WTC11 (cell line): ENCODE measurements at regions of chr12 and their contacts with region 1.

Region 1: DNA sequence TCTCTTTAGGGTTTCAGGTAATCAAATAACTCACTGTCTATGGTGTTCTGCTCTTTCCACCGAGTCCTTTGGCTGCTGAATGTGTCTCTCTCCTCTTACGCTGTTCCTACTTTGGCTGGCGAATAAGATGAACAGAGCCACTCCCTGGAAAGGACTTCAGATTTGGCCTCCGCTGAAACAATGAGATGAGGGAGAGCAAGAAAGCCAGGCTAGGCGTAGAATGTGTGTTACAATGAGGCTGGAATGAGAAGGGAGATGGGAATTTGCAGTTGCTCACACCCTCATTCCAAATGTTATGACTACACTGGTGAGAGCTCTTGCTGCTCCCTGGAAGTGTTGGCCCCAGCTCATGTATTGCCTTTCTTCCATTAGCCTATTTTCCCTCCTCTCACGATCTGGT is at the start of gene MFAP5:
- DNase-seq: no peak
- ATAC-seq: peak; percentile 29; the same call in 1 of the 2 replicates
- H3K4me3 Mint-ChIP-seq: no peak within 1 kb of the TSS
- H3K27ac Mint-ChIP-seq: no peak within 1 kb of the TSS
- H3K4me1 Mint-ChIP-seq: peaks cover 5% of the 10 kb centered on the region
- H3K27me3 Mint-ChIP-seq: no peaks in the 10 kb centered on the region
- CTCF ChIP-seq: no peak
- total RNA-seq, gene MFAP5: 0.69 to 0.96 TPM in 2 of 3 replicates, not detected in the other

Region 2: GRCh38 chr12:8609061-8609570 is 53.5 kb before region 1 on chr12:
- CTCF ChIA-PET with region 1: interaction called, 22 read pairs
- POLR2A ChIA-PET with region 1: no interaction called
- DNase-seq: peak; percentile 33
- ATAC-seq: peak; percentile 61
- H3K4me3 Mint-ChIP-seq: no peak overlapping the region
- H3K27ac Mint-ChIP-seq: no peak overlapping the region
- H3K4me1 Mint-ChIP-seq: peaks cover 34% of the 10 kb centered on the region
- H3K27me3 Mint-ChIP-seq: peaks cover 6% of the 10 kb centered on the region
- CTCF ChIP-seq: peak; percentile 37; the same call in 1 of the 2 replicates

Region 3: DNA sequence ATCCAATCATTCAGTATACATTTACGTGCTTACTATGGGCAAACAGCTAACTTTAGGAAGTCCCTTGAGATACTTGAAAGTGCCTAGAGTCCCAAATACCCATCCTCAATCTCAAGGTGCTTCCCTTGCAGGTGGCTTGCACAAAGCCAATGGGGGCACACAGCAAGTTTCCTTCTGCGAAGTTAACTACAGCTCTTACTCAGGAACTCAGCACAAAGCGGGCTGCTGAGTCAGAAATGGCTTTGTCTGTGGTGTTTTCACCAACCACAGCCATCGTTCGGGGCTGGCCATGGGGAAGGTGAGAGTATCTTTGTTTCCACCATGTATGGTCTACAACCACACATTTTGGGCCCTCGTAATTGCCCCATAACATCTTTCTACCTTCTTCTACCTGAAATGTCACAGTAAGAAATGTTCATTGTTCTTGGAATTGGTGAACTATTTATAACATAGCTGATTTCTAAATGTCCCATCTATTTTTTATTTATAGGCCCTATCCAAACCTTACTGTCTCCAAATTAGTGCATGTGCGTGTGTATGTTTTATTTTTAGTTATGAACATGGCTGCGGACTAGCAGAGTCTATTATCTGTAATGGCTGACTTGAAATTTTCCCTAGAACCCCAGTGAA is 13.9 kb before region 1 on chr12:
- CTCF ChIA-PET with region 1: interaction called, 13 read pairs
- POLR2A ChIA-PET with region 1: no interaction called
- DNase-seq: no peak
- ATAC-seq: no peak
- H3K4me3 Mint-ChIP-seq: no peak overlapping the region
- H3K27ac Mint-ChIP-seq: no peak overlapping the region
- H3K4me1 Mint-ChIP-seq: peaks cover 20% of the 10 kb centered on the region
- H3K27me3 Mint-ChIP-seq: no peaks in the 10 kb centered on the region
- CTCF ChIP-seq: no peak

Region 4: GRCh38 chr12:8681041-8681902 is 18.7 kb after region 1 on chr12:
- CTCF ChIA-PET with region 1: interaction called, 40 read pairs
- POLR2A ChIA-PET with region 1: no interaction called
- DNase-seq: no peak
- ATAC-seq: peak; percentile 55
- H3K4me3 Mint-ChIP-seq: peak overlapping the region; percentile 64
- H3K27ac Mint-ChIP-seq: peak overlapping the region; percentile 93
- H3K4me1 Mint-ChIP-seq: peaks cover 30% of the 10 kb centered on the region
- H3K27me3 Mint-ChIP-seq: no peaks in the 10 kb centered on the region
- CTCF ChIP-seq: no peak